ENCODE measurements at regions of chr2 and their contacts with region 1.

Region 1: DNA sequence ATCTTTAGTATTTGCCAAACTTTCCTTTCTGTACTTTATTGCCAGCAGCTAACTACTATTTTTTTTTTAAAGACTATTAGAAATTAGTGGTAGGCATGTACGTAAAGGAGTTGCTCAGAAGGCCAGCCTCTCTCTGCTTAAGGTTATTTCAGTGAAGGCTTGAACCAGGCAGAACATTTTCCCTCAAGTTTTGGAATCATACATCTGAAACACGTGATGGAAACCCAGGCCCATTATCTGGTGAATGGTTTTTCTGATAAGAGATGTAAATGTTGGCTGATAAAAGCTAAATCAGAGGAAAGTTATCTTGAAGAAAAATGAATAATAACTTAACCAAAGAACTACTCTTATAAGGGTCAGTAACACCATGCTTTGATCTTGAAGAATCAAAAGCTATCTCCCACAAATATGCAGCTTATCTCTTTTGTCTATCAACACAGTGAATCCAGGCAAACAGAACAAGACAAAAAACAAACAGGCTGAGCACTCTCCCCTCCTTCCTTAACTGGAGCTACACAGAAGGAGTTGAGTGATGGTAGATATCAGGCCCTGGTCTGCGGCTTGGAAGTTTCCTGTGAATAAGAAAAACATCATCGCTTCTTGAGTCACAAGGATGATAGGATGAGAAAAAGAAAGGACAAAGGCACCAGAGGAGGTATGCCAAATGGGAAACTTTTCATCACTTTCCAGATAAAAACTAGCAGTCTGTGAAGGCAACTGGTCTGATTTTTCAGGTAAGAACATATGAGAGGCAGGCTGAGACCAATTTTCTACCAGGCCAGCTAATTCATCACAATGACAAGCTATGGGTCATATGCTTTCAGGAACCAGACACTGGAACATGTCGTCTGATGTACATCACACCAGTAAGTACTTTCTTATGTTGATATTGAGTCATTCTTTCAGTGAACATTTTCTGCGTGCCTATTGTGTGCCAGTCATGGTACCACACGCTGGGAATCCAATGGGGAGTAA is 88.4 kb upstream of the STK17B start:
- DNase-seq: peak; percentile 88 to 91
- H3K4me3 ChIP-seq: peak overlapping the region; percentile 36
- H3K4me3 Mint-ChIP-seq: peak overlapping the region; percentile 90
- H3K27ac Mint-ChIP-seq: peak overlapping the region; percentile 90
- H3K4me1 ChIP-seq: peaks cover 31% of the 10 kb centered on the region
- H3K4me1 Mint-ChIP-seq: peaks cover 17% of the 10 kb centered on the region
- H3K27me3 ChIP-seq: no peaks in the 10 kb centered on the region
- H3K27me3 Mint-ChIP-seq: no peaks in the 10 kb centered on the region
- CTCF ChIP-seq: no peak

Region 2: DNA sequence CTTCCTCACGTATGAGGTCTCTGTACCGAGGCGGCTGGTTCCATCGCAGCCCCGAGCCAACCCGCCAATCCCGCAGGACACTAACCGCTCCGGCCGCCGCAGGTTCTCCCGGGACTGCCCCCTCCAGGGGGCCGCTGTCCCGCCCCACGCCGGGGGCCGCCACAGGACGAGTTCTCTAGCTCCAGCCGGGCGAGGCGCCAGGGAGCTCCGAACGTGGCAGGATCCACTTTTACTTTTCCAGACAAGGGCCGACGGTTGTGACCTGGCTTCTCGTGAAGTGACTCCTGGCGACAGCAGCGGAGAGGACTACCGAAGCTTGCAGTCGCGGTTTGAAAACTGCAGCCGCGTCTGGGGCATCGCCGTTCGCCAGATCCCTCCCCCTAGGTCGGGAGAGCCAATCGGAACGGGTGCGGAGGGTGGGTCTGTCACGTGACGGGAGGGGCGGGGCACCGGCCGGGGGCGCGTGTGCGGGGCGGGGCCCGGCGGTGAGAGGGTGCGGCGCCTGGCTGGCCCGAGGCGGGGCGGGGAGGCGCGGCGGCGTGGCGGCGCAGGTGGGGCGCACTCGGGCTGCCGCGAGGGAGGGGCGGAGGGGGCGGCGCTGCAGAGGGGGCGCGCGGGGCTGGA is 88.4 kb before region 1 on chr2 and contains the start of gene STK17B:
- CTCF ChIA-PET with region 1: interaction called, 3 read pairs
- POLR2A ChIA-PET with region 1: interaction called, 12 read pairs
- intact Hi-C with region 1: loop called (anchors 1 kb)
- DNase-seq: peak; percentile 96 to 97
- H3K4me3 ChIP-seq: peak within 1 kb of the TSS; percentile 96
- H3K4me3 Mint-ChIP-seq: peak within 1 kb of the TSS; percentile 97
- H3K27ac Mint-ChIP-seq: peak within 1 kb of the TSS; percentile 83
- H3K4me1 ChIP-seq: peaks cover 19% of the 10 kb centered on the region
- H3K4me1 Mint-ChIP-seq: peaks cover 30% of the 10 kb centered on the region
- H3K27me3 ChIP-seq: no peaks in the 10 kb centered on the region
- H3K27me3 Mint-ChIP-seq: no peaks in the 10 kb centered on the region
- CTCF ChIP-seq: peak in 1 of 2 experiments; percentile 0
- total RNA-seq, gene STK17B: 54.7 and 58.0 TPM in 2 replicates

Region 3: GRCh38 chr2:196208915-196209314 is 50.9 kb before region 1 on chr2:
- CTCF ChIA-PET with region 1: no interaction called
- POLR2A ChIA-PET with region 1: interaction called, 8 read pairs
- intact Hi-C with region 1: loop called (anchors 1 kb)
- DNase-seq: peak; percentile 78 to 85
- H3K4me3 ChIP-seq: no peak overlapping the region
- H3K4me3 Mint-ChIP-seq: peak overlapping the region; percentile 51
- H3K27ac Mint-ChIP-seq: peak overlapping the region; percentile 89
- H3K4me1 ChIP-seq: peaks cover 37% of the 10 kb centered on the region
- H3K4me1 Mint-ChIP-seq: peaks cover 26% of the 10 kb centered on the region
- H3K27me3 ChIP-seq: no peaks in the 10 kb centered on the region
- H3K27me3 Mint-ChIP-seq: no peaks in the 10 kb centered on the region
- CTCF ChIP-seq: no peak

Region 4: GRCh38 chr2:196233021-196233804 is 26.6 kb before region 1 on chr2:
- CTCF ChIA-PET with region 1: interaction called, 4 read pairs
- POLR2A ChIA-PET with region 1: no interaction called
- intact Hi-C with region 1: loop called (anchors 1 kb)
- DNase-seq: peak in 1 of 2 experiments; percentile 27
- H3K4me3 ChIP-seq: no peak overlapping the region
- H3K4me3 Mint-ChIP-seq: no peak overlapping the region
- H3K27ac Mint-ChIP-seq: no peak overlapping the region
- H3K4me1 ChIP-seq: peaks cover 15% of the 10 kb centered on the region
- H3K4me1 Mint-ChIP-seq: no peaks in the 10 kb centered on the region
- H3K27me3 ChIP-seq: no peaks in the 10 kb centered on the region
- H3K27me3 Mint-ChIP-seq: no peaks in the 10 kb centered on the region
- CTCF ChIP-seq: no peak

Region 5: GRCh38 chr2:196758474-196759377 is 498.9 kb after region 1 on chr2:
- CTCF ChIA-PET with region 1: no interaction called
- POLR2A ChIA-PET with region 1: no interaction called
- intact Hi-C with region 1: no loop called
- DNase-seq: no peak
- H3K4me3 ChIP-seq: no peak overlapping the region
- H3K4me3 Mint-ChIP-seq: no peak overlapping the region
- H3K27ac Mint-ChIP-seq: no peak overlapping the region
- H3K4me1 ChIP-seq: no peaks in the 10 kb centered on the region
- H3K4me1 Mint-ChIP-seq: no peaks in the 10 kb centered on the region
- H3K27me3 ChIP-seq: no peaks in the 10 kb centered on the region
- H3K27me3 Mint-ChIP-seq: no peaks in the 10 kb centered on the region
- CTCF ChIP-seq: peak in 1 of 2 experiments; percentile 24